Naive thymus-derived CD4-positive, alpha-beta T cell (primary cell): ENCODE measurements at regions of chr11 and their contacts with region 1.

Region 1: DNA sequence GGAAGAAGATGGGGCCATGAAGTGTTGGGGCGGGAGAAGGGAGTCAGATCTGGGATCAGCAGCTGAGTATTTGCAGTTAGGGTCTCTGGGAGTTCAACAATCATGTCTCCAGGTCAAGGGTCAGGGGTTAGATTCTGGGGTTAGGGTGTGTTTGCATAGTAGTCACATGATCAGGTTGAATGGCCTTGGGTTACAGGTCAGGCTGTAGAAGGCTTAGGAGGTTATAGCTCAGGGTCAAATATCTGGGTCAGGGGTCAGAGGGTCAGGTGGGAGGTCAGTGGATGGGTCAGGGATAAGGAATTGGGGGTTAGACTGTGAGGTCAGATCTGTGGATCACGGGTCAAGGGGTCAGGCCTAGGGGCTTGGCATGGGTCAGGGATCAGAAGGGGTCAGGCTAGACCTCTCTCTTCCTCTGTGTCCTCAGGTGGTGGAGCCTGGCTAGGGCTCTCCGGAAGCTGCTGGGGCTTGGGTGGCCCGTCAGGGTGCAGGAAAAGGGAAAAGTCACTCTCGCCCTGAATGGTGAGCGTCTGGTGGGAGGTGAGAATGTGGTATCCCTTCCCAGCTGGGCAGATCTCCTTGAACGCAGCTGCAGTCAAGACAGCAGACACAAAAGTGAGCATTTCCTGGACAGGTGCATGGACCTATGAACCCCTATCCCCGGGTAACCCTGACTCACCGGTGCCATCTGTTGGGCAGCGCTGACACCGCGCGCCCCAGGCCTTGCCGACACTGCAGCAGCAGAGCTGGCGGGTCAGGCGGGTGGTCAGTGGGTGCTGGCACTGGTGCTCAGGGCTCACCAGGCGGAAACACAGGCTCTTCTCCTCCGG is 6.4 kb downstream of the LTBP3 start:
- DNase-seq: peak in 6 of 9 donors; percentile 51 to 62 (median 56)
- ATAC-seq: peak; percentile 53
- H3K4me3 ChIP-seq: no peak overlapping the region
- H3K4me3 Mint-ChIP-seq: peak overlapping the region; percentile 18 to 98 (median 74)
- H3K27ac ChIP-seq: peak overlapping the region; percentile 31
- H3K27ac Mint-ChIP-seq: peak overlapping the region; percentile 71 to 93 (median 87)
- H3K4me1 ChIP-seq: peaks cover 35 to 78% of the 10 kb centered on the region in 2 donors
- H3K4me1 Mint-ChIP-seq: peaks cover 50 to 86% (median 74%) of the 10 kb centered on the region in 7 donors
- H3K27me3 ChIP-seq: no peaks in the 10 kb centered on the region
- H3K27me3 Mint-ChIP-seq: no peaks in the 10 kb centered on the region

Region 2: DNA sequence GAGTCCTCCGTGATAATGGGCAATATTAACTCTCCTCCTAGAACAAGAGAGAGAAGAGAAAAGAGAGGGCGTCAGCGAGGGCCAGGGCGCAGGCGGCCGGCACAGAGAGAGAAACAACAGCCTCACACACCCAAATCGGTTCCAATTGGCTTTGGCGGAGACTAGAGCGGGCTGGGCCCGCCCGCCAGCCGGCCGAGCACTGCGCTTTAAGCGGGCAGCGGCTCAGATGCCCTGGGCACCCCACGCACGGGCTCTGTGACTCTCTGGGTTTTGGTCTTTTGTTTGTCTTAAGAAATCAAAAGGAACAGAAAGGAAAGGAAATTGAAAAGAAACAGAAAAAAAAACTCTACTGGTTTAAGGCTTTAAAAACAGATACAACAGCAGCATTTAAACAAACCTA is 943.7 kb before region 1 on chr11:
- CTCF ChIA-PET with region 1: no interaction called
- POLR2A ChIA-PET with region 1: no interaction called
- intact Hi-C with region 1: no loop called
- DNase-seq: no peak
- ATAC-seq: no peak
- H3K4me3 ChIP-seq: no peak overlapping the region
- H3K4me3 Mint-ChIP-seq: peak overlapping the region in 1 of 10 donors; percentile 19
- H3K27ac ChIP-seq: no peak overlapping the region
- H3K27ac Mint-ChIP-seq: no peak overlapping the region
- H3K4me1 ChIP-seq: peaks cover 0 to 9% of the 10 kb centered on the region in 2 donors
- H3K4me1 Mint-ChIP-seq: peaks cover 11 to 25% (median 15%) of the 10 kb centered on the region in 7 donors
- H3K27me3 ChIP-seq: no peaks in the 10 kb centered on the region
- H3K27me3 Mint-ChIP-seq: no peaks in the 10 kb centered on the region

Region 3: GRCh38 chr11:65524741-65525545 is 26.8 kb before region 1 on chr11 and contains the start of gene SCYL1:
- CTCF ChIA-PET with region 1: interaction called, 3 read pairs
- POLR2A ChIA-PET with region 1: interaction called, 11 read pairs
- intact Hi-C with region 1: loop called in 1 of 2 experiments (anchors 1 kb)
- DNase-seq: peak; percentile 58 to 86 (median 77)
- ATAC-seq: peak; percentile 97
- H3K4me3 ChIP-seq: peak within 1 kb of the TSS; percentile 79
- H3K4me3 Mint-ChIP-seq: peak within 1 kb of the TSS; percentile 86 to 96 (median 90)
- H3K27ac ChIP-seq: peak within 1 kb of the TSS; percentile 96
- H3K27ac Mint-ChIP-seq: peak within 1 kb of the TSS; percentile 89 to 98 (median 95)
- H3K4me1 ChIP-seq: peaks cover 31 to 40% of the 10 kb centered on the region in 2 donors
- H3K4me1 Mint-ChIP-seq: peaks cover 32 to 66% (median 54%) of the 10 kb centered on the region in 7 donors
- H3K27me3 ChIP-seq: no peaks in the 10 kb centered on the region
- H3K27me3 Mint-ChIP-seq: no peaks in the 10 kb centered on the region
- total RNA-seq, gene SCYL1: 63.2 to 79.8 (median 70.4) TPM